Activated B cell treated with CpG ODN at 0.5 μM for 24 hours (primary cell): ENCODE measurements at regions of chr17 and their contacts with region 1.

Region 1: GRCh38 chr17:27455914-27456680 is at the start of gene KSR1:
- DNase-seq: peak; percentile 81
- ATAC-seq: peak; percentile 94
- H3K4me3 Mint-ChIP-seq: peak within 1 kb of the TSS; percentile 92
- H3K27ac Mint-ChIP-seq: peak within 1 kb of the TSS; percentile 78
- H3K4me1 Mint-ChIP-seq: peaks cover 22% of the 10 kb centered on the region
- H3K27me3 Mint-ChIP-seq: no peaks in the 10 kb centered on the region
- CTCF ChIP-seq: no peak
- total RNA-seq, gene KSR1: 90.1 and 114 TPM in 2 replicates

Region 2: GRCh38 chr17:27353461-27354050 is 102.5 kb before region 1 on chr17:
- CTCF ChIA-PET with region 1: no interaction called
- POLR2A ChIA-PET with region 1: interaction called, 3 read pairs
- intact Hi-C with region 1: loop called (anchors 1 kb)
- DNase-seq: peak; percentile 90
- ATAC-seq: peak; percentile 87
- H3K4me3 Mint-ChIP-seq: peak overlapping the region; percentile 89
- H3K27ac Mint-ChIP-seq: peak overlapping the region; percentile 83
- H3K4me1 Mint-ChIP-seq: peaks cover 22% of the 10 kb centered on the region
- H3K27me3 Mint-ChIP-seq: no peaks in the 10 kb centered on the region
- CTCF ChIP-seq: peak; percentile 50

Region 3: GRCh38 chr17:27466743-27467375 is 10.8 kb after region 1 on chr17:
- CTCF ChIA-PET with region 1: interaction called, 18 read pairs
- POLR2A ChIA-PET with region 1: interaction called, 61 read pairs
- intact Hi-C with region 1: no loop called
- DNase-seq: peak; percentile 29
- ATAC-seq: peak; percentile 75
- H3K4me3 Mint-ChIP-seq: peak overlapping the region; percentile 42
- H3K27ac Mint-ChIP-seq: peak overlapping the region; percentile 54
- H3K4me1 Mint-ChIP-seq: peaks cover 67% of the 10 kb centered on the region
- H3K27me3 Mint-ChIP-seq: no peaks in the 10 kb centered on the region
- CTCF ChIP-seq: no peak

Region 4: GRCh38 chr17:27506348-27507231 is 50.5 kb after region 1 on chr17:
- CTCF ChIA-PET with region 1: interaction called, 9 read pairs
- POLR2A ChIA-PET with region 1: interaction called, 11 read pairs
- intact Hi-C with region 1: loop called (anchors 1 kb)
- DNase-seq: peak; percentile 49
- ATAC-seq: peak; percentile 88
- H3K4me3 Mint-ChIP-seq: peak overlapping the region; percentile 62
- H3K27ac Mint-ChIP-seq: peak overlapping the region; percentile 83
- H3K4me1 Mint-ChIP-seq: peaks cover 46% of the 10 kb centered on the region
- H3K27me3 Mint-ChIP-seq: no peaks in the 10 kb centered on the region
- CTCF ChIP-seq: no peak

Region 5: DNA sequence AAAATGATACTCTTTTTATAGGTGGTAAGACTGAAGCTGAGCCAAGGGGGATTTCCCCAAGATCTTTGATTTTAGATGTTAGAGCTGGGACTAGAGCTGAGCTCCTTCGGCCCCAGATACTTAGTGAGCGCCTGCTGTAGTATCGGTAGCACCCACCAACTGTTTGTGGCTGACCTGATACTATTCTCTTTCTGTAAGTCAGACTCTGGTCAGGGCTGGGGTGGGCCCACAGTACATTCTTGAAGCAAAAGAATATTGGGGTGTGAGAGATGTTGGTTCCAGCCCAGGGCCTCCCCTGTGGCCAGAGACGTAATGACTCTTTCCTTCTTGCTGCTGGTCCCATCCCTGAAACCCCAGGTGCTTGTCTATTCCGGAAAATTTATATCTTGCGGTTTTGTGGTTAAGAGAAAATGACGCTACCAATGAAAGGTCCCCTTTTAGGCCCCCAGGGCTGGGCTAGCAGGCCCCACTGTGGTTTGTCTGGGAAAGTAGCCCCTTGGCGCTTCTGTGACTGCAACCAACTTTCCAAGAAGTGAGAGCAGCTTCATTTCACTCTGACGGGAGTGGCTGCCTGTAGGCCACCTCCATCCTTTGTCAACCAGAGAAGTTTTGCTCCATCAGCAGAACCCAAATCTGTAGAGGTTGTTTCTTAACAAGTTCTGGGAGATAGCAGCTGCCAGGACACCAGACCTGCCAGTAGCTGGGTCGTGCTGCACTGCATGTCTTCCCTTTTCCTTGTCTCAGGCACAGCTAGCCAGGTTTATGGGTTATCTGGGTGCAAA is 88.4 kb after region 1 on chr17:
- CTCF ChIA-PET with region 1: interaction called, 8 read pairs
- POLR2A ChIA-PET with region 1: interaction called, 41 read pairs
- intact Hi-C with region 1: loop called (anchors 1 kb)
- DNase-seq: peak; percentile 48
- ATAC-seq: peak; percentile 74
- H3K4me3 Mint-ChIP-seq: peak overlapping the region; percentile 72
- H3K27ac Mint-ChIP-seq: peak overlapping the region; percentile 90
- H3K4me1 Mint-ChIP-seq: peaks cover 76% of the 10 kb centered on the region
- H3K27me3 Mint-ChIP-seq: no peaks in the 10 kb centered on the region
- CTCF ChIP-seq: no peak